ENCODE measurements at regions of chr19 and their contacts with region 1.

Region 1: GRCh38 chr19:4633140-4633967 is 6.0 kb upstream of the TNFAIP8L1 start:
- DNase-seq: peak; percentile 16
- ATAC-seq: peak; percentile 84
- H3K4me3 ChIP-seq: no peak overlapping the region
- H3K27ac ChIP-seq: no peak overlapping the region
- H3K4me1 ChIP-seq: peaks cover 3% of the 10 kb centered on the region
- H3K27me3 ChIP-seq: no peaks in the 10 kb centered on the region
- CTCF ChIP-seq: peak; percentile 67 to 90 (median 76)
- EP300 ChIP-seq: no peak
- POLR2A ChIP-seq: no peak
- RAD21 ChIP-seq: 0 out of 2 replicates have a peak, but pooled peaks have one; percentile 30

Region 2: DNA sequence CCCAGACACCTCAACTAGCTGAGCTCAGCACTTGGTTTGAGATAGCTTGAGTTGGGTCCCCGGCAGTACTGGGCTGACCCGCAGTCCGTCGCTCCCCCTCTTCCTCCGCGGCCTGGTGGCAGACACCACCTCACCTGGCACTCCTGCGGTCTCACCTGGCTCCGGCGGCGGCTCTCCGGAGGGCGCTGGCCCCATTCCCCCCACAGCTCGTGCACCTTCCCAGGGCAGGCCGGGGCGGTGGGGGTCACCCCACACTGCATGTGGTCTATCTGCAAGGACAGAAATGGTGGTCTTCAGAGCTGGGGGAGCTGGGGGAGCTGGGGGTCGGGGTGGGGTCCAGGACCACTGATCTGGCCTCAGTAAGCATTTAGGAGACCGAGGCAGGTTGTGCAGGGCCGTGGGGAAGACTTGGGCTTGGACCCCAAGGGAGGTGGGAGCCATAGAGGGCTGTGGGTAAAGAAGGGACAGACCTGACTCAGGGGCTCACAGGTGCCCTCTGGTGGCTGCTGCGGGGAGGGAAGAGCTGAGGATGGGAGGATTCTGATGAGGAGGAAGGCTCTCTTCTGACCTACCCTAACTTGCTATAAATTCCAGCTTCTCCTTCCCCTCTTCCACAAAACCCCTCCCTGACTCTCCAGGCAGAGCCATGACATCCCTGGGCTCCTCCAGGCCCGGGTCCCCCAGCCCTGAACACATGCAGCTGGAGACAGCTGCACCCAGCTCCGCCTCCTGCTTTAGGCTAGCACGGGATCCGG is 108.4 kb before region 1 on chr19:
- CTCF ChIA-PET with region 1: interaction called, 34 read pairs
- POLR2A ChIA-PET with region 1: no interaction called
- RAD21 ChIA-PET with region 1: interaction called, 4 read pairs
- SMC1A ChIA-PET with region 1: no interaction called
- in situ Hi-C with region 1: no loop called
- intact Hi-C with region 1: no loop called
- DNase-seq: no peak
- ATAC-seq: peak; percentile 93
- H3K4me3 ChIP-seq: no peak overlapping the region
- H3K27ac ChIP-seq: no peak overlapping the region
- H3K4me1 ChIP-seq: no peaks in the 10 kb centered on the region
- H3K27me3 ChIP-seq: no peaks in the 10 kb centered on the region
- CTCF ChIP-seq: peak; percentile 65 to 91 (median 77)
- EP300 ChIP-seq: no peak
- POLR2A ChIP-seq: no peak
- RAD21 ChIP-seq: peak; percentile 43

Region 3: DNA sequence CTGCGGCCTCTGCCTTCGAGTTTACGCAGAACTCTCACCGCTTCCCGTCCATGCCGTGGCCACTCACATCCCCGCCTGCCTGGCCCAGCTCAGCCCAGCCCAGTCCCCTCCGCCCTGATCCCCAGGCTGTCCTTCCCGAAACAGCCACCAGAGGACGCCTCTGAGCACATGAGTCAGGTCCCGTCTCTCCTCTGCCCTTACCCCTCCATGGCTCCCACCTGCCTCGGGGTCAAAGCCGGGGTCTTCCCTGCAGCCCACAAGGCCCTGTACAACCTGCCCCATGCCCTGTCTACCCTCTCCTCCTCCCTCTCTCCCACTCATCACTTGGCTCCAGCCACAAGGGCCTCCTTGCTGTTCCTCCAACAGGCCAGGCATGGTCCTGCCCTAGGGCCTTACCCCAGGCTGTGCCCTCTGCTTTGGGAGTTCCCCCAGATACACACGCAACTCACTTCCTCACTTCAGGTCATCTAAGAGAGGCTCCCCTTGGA is 65.7 kb before region 1 on chr19:
- CTCF ChIA-PET with region 1: interaction called, 94 read pairs
- POLR2A ChIA-PET with region 1: interaction called, 3 read pairs
- RAD21 ChIA-PET with region 1: interaction called, 16 read pairs
- SMC1A ChIA-PET with region 1: interaction called, 5 read pairs
- in situ Hi-C with region 1: no loop called
- intact Hi-C with region 1: no loop called
- DNase-seq: no peak
- ATAC-seq: peak; percentile 84
- H3K4me3 ChIP-seq: no peak overlapping the region
- H3K27ac ChIP-seq: no peak overlapping the region
- H3K4me1 ChIP-seq: no peaks in the 10 kb centered on the region
- H3K27me3 ChIP-seq: no peaks in the 10 kb centered on the region
- CTCF ChIP-seq: peak; percentile 57 to 90 (median 70)
- EP300 ChIP-seq: no peak
- POLR2A ChIP-seq: no peak
- RAD21 ChIP-seq: 0 out of 2 replicates have a peak, but pooled peaks have one; percentile 16

Region 4: DNA sequence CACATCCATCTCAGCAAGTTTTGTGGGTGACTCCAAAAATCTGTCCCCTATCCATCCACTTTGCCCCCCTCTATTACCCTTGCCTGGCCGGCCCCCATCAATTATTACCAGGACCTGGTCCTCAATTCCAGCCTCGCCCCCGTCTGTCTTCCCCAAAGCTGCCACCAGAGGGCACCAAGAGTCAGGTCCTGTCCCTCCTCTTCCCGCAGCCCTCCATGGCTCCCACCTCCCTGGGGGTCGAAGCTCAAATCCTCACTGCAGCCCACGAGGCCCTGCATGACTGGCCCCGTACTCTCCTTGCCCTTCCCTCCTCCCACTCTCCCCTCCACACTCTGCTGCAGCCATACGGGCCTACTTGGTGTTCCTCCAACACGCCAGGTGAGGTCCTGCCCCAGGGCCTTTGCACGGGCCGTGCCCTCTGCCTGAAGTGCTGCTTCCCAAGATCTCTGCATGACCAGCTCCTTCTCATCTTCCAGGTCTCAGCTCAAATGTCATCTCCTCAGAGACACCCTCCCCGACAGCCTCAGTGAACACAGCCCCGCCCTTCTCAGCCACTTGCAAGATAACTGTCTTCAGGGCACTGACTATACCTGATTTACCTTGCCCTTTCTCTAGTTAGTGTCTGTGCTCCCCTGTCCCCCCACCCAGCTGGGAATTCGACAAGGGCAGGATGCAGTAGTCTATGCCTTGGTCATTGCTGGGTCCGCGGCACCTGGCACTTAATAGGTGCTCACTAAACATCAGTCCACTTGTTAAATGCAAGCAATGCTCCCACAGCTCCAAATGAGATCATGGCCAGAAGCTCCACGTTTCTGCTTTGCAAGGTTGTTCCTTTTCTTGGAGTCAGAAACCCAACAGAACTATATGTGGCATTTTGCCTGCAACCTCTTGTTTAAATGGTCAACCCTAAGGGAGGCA is 57.1 kb before region 1 on chr19:
- CTCF ChIA-PET with region 1: interaction called, 94 read pairs
- POLR2A ChIA-PET with region 1: interaction called, 3 read pairs
- RAD21 ChIA-PET with region 1: interaction called, 13 read pairs
- SMC1A ChIA-PET with region 1: interaction called, 13 read pairs
- in situ Hi-C with region 1: loop called (anchors 5 kb)
- intact Hi-C with region 1: loop called (anchors 2 kb)
- DNase-seq: no peak
- ATAC-seq: peak; percentile 83
- H3K4me3 ChIP-seq: no peak overlapping the region
- H3K27ac ChIP-seq: no peak overlapping the region
- H3K4me1 ChIP-seq: no peaks in the 10 kb centered on the region
- H3K27me3 ChIP-seq: peaks cover 2 to 4% of the 10 kb centered on the region in 2 experiments
- CTCF ChIP-seq: peak; percentile 66 to 80 (median 74)
- EP300 ChIP-seq: no peak
- POLR2A ChIP-seq: no peak
- RAD21 ChIP-seq: peak; percentile 57

Region 5: DNA sequence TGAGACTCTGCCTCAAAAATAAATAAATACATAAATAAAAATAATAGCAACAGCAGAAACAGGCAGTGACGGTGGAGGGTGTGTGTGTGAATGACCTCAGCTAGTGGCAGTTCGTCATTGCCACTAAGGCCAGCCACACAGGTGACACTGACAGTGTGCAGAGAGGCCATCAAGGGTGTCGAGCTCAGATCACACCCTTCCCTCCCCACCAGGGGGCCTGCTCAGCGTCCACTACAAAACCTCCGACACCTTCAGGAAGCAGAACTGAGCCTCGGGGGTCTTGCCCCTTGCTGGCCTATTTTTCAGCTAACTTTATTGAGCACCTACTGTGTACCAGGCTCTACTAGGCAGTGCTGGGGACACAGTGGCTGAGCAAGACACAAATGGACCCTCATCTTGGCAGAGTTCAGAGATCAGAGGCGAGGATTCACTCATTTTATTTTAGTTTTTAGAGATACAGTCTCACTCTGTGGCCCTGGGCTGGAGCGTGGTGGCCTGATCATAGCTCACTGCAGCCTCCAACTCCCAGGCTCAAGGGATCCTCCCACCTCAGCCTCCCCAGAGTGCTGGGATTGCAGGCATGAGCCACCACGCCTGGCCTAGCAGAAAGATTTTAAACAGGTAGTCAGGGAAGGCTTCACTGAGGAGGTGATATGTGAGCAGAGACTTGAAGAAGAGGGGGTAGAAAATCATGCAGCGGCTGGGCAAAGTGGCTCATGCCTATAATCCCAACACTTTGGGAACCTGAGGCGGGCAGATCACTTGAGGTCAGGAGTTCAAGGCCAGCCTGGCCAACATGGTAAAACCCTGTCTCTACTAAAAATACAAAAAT is 43.6 kb before region 1 on chr19:
- CTCF ChIA-PET with region 1: interaction called, 24 read pairs
- POLR2A ChIA-PET with region 1: no interaction called
- RAD21 ChIA-PET with region 1: interaction called, 9 read pairs
- SMC1A ChIA-PET with region 1: interaction called, 6 read pairs
- in situ Hi-C with region 1: no loop called
- intact Hi-C with region 1: loop called (anchors 1 kb)
- DNase-seq: no peak
- ATAC-seq: peak; percentile 93
- H3K4me3 ChIP-seq: no peak overlapping the region
- H3K27ac ChIP-seq: no peak overlapping the region
- H3K4me1 ChIP-seq: no peaks in the 10 kb centered on the region
- H3K27me3 ChIP-seq: peaks cover 2 to 4% of the 10 kb centered on the region in 2 experiments; a peak in 3 of 4 replicates
- CTCF ChIP-seq: peak; percentile 38 to 73 (median 60)
- EP300 ChIP-seq: no peak
- POLR2A ChIP-seq: no peak
- RAD21 ChIP-seq: 0 out of 2 replicates have a peak, but pooled peaks have one; percentile 26

Measured in GM12878 (cell line).